ENCODE measurements at regions of chr4 and their contacts with region 1.

Region 1: GRCh38 chr4:23476515-23477090 is 413.2 kb downstream of the PPARGC1A start:
- DNase-seq: no peak
- ATAC-seq: no peak
- H3K4me3 ChIP-seq: no peak overlapping the region
- H3K4me3 Mint-ChIP-seq: no peak overlapping the region
- H3K27ac ChIP-seq: no peak overlapping the region
- H3K27ac Mint-ChIP-seq: no peak overlapping the region
- H3K4me1 ChIP-seq: no peaks in the 10 kb centered on the region
- H3K4me1 Mint-ChIP-seq: no peaks in the 10 kb centered on the region
- H3K27me3 ChIP-seq: no peaks in the 10 kb centered on the region
- H3K27me3 Mint-ChIP-seq: no peaks in the 10 kb centered on the region
- CTCF ChIP-seq: no peak

Region 2: GRCh38 chr4:23324021-23324690 is 152.4 kb before region 1 on chr4:
- CTCF ChIA-PET with region 1: no interaction called
- POLR2A ChIA-PET with region 1: no interaction called
- intact Hi-C with region 1: no loop called
- DNase-seq: no peak
- ATAC-seq: no peak
- H3K4me3 ChIP-seq: no peak overlapping the region
- H3K4me3 Mint-ChIP-seq: no peak overlapping the region
- H3K27ac ChIP-seq: no peak overlapping the region
- H3K27ac Mint-ChIP-seq: no peak overlapping the region
- H3K4me1 ChIP-seq: no peaks in the 10 kb centered on the region
- H3K4me1 Mint-ChIP-seq: no peaks in the 10 kb centered on the region
- H3K27me3 ChIP-seq: no peaks in the 10 kb centered on the region
- H3K27me3 Mint-ChIP-seq: no peaks in the 10 kb centered on the region
- CTCF ChIP-seq: no peak

Region 3: DNA sequence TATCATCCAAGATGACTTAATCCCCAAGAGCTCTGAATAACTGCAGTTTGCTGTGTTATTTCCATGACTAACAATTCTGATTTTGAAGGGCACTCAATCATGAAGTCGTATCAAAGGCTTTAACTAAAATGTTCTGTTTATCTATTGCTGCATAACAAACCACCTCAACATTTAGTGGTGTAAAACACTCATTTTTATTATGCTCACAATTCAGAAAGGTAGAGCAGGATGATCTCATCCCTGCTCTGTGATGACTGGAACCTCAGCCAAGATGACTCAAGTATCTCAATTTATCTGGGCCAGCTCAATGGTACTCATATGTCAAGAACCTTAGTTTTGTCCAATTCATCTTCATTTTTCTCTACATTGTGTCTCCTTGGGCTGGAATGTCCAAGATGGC is 37.8 kb before region 1 on chr4:
- CTCF ChIA-PET with region 1: no interaction called
- POLR2A ChIA-PET with region 1: no interaction called
- intact Hi-C with region 1: loop called in 1 of 2 experiments (anchors 1 kb)
- DNase-seq: no peak
- ATAC-seq: no peak
- H3K4me3 ChIP-seq: no peak overlapping the region
- H3K4me3 Mint-ChIP-seq: no peak overlapping the region
- H3K27ac ChIP-seq: no peak overlapping the region
- H3K27ac Mint-ChIP-seq: no peak overlapping the region
- H3K4me1 ChIP-seq: no peaks in the 10 kb centered on the region
- H3K4me1 Mint-ChIP-seq: no peaks in the 10 kb centered on the region
- H3K27me3 ChIP-seq: peaks cover 0 to 2% of the 10 kb centered on the region in 2 experiments
- H3K27me3 Mint-ChIP-seq: no peaks in the 10 kb centered on the region
- CTCF ChIP-seq: no peak